ENCODE measurements at regions of chr17 and their contacts with region 1.

Region 1: GRCh38 chr17:29059281-29059680 is 16.3 kb downstream of the PIPOX start:
- DNase-seq: no peak
- H3K4me3 ChIP-seq: no peak overlapping the region
- H3K27ac ChIP-seq: no peak overlapping the region
- H3K4me1 ChIP-seq: no peaks in the 10 kb centered on the region
- H3K27me3 ChIP-seq: no peaks in the 10 kb centered on the region
- CTCF ChIP-seq: no peak

Region 2: GRCh38 chr17:28230011-28230410 is 829.3 kb before region 1 on chr17:
- intact Hi-C with region 1: loop called (anchors 10 kb)
- DNase-seq: no peak
- H3K4me3 ChIP-seq: no peak overlapping the region
- H3K27ac ChIP-seq: no peak overlapping the region
- H3K4me1 ChIP-seq: peaks cover 0 to 3% of the 10 kb centered on the region in 2 donors
- H3K27me3 ChIP-seq: peaks cover 6% of the 10 kb centered on the region
- CTCF ChIP-seq: no peak

Region 3: DNA sequence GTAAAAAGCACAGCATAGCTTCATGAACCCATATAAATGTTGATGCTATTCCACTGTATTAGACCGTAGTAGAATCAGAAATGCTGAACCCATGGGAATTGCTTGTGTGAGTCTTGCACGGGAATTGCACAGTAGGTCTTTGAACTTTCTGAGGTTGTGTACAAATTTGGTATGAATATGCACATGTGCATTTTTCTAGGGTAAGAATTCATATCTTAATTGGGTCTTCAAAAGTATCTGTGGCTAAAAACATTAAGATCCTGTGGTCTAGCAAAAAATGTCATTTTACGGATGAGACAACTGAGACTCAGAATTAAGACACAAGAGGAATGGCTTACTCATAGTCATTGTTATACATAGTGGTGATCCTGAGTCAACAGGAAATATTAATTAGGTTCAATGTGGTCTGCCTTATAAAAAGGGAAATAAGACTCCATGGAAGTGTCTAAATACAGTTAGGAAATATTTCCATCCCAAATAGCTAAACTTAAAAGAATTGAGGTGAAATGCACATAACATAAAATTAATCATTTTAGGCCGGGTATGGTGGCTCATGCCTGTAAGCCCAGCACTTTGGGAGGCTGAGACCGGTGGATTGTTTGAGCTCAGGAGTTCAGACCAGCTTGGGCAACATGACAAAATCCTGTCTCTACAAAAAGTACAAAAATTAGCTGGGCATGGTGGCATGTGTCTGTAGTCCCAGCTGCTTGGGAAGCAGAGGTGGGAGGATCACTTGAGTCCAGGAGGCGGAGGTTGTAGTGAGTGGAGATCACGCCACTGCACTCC is 353.7 kb after region 1 on chr17:
- intact Hi-C with region 1: no loop called
- DNase-seq: no peak
- H3K4me3 ChIP-seq: no peak overlapping the region
- H3K27ac ChIP-seq: peak overlapping the region in 1 of 2 donors; percentile 44
- H3K4me1 ChIP-seq: peaks cover 0 to 11% of the 10 kb centered on the region in 2 donors
- H3K27me3 ChIP-seq: no peaks in the 10 kb centered on the region
- CTCF ChIP-seq: no peak

Measured in ascending aorta (tissue), 2 donors.